Gastrocnemius medialis (tissue), 4 donors: ENCODE measurements at regions of chr4 and their contacts with region 1.

Region 1: DNA sequence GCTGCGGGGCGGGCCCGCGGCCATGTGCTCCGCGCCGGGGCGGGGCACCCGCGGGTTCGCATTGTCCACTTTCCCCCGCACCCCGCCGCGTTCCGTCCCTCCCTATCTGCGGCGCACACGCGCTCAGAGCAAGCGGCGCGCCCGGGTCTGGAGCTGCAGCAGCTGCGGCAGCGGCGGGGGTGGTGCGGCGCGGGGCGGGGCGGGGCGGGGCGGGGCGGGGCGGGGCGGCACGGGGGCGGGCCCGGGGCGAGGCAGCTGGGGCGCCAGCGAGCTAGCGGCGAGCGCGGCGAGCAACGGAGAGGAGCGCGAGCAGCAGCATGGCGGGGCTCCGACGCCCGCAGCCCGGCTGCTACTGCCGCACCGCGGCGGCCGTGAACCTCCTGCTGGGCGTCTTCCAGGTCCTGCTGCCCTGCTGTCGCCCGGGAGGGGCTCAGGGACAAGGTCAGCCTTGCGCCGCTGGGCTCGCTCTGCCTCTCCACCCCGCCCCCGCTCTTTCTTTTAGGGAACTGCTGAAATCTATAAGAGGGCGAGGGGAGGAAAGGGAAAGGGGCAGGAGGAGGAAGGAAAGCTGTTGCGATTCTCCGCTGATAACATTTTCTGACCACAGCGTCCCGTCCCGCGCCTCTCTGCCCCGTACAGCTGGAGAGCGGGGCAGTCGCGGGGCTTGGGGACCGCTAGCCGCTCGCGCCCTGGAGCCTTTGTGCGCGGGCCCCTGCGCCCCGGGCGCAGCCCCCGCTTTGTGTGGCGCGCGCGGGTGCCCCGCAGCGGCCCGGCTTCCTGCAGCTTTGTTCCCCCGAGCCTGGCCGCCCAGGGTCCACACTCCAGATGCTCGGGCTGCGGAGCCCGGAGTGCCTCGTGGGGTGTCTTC is at the start of gene TMEM131L:
- DNase-seq: peak; percentile 61 to 72
- ATAC-seq: peak; percentile 52 to 59
- H3K4me3 ChIP-seq: peak within 1 kb of the TSS; percentile 72 to 95 (median 86)
- H3K27ac ChIP-seq: peak within 1 kb of the TSS; percentile 88 to 98 (median 92)
- H3K4me1 ChIP-seq: peaks cover 56 to 59% of the 10 kb centered on the region in 2 donors
- H3K27me3 ChIP-seq: no peaks in the 10 kb centered on the region
- CTCF ChIP-seq: peak in 1 of 5 experiments; percentile 4
- POLR2A ChIP-seq: peak; percentile 81 to 93
- total RNA-seq, gene TMEM131L: 4.6 to 21.4 (median 9.5) TPM

Region 2: DNA sequence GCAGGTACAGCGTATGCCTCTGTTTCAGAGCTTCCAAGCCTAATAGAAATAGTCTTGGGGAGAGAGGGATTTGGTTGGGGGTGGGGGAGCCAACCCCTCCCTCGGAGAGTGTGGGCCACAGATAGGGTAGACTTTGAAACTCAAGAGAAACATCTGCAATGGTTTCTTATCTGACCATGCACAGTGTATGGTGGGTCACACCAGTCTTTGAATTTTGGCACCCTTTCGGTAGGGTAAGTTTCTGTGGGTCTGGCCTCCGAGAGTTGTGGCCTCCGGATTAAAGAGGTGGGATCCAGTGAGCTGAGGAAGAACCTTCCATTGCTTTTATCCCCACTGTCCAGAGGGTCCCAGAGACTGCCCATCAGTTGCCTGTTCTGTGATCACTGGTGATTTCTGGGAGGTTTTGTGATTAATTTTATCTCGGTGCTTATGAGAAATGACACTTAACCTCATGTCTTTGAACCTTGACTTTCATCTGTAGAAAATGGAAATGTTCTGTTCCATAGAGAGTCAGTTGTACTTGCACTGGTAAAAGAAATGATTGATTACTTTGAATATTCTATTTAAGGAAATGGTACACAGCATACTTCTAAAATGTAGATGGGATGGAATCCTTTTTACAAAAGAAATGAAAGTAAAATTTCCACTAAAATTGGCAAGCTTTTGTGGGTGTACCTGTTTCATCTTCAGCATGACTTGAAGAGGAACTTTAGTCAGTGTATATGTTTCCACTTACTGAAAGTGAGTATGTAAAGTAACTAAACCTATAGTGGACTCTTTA is 62.6 kb after region 1 on chr4:
- in situ Hi-C with region 1: no loop called
- intact Hi-C with region 1: loop called (anchors 2 kb)
- DNase-seq: no peak
- ATAC-seq: no peak
- H3K4me3 ChIP-seq: no peak overlapping the region
- H3K27ac ChIP-seq: peak overlapping the region; percentile 77 to 83 (median 83)
- H3K4me1 ChIP-seq: peaks cover 71 to 78% of the 10 kb centered on the region in 2 donors
- H3K27me3 ChIP-seq: no peaks in the 10 kb centered on the region
- CTCF ChIP-seq: no peak
- POLR2A ChIP-seq: no peak